GM18951 (cell line): ENCODE measurements at regions of chr11 and their contacts with region 1.

Region 1: DNA sequence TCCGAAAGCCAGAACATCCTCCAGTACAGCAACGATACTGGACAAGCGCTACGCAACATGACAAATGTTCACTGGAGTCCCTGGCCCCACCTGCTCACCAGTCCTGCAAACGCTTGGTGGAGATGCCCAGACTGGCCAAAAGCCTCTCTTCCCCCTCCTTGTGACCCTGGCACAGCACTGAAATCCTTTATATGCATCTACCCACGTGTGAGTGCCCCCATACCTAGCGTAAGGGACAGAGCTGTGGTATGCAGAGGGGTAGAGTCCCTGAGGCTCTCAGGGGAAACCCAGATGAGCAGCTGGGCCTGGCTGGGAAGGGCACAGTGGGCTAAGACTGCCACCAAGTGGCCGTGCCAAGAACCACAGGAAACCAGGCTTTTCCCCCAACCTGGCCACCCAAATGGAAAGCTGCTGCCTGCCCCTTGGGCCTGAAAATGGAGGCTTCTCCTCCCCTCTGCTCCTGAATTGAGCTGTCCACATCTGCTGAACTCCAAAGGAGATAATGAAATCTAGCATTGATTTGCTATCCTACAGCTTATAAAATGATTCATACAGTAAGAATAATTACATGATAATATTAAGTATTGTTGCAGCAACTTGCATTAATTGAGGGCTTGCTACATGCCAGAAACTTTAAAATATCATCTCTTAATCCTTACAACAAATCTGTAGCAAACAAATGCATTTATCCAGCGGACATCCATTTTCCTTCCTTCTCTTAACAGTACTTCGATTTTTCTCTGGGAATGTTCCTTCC is 24.8 kb upstream of the TTC12 start:
- POLR2A ChIP-seq: no peak

Region 2: GRCh38 chr11:112280268-112281126 is 1009.1 kb before region 1 on chr11:
- in situ Hi-C with region 1: loop called (anchors 25 kb)
- POLR2A ChIP-seq: no peak

Region 3: DNA sequence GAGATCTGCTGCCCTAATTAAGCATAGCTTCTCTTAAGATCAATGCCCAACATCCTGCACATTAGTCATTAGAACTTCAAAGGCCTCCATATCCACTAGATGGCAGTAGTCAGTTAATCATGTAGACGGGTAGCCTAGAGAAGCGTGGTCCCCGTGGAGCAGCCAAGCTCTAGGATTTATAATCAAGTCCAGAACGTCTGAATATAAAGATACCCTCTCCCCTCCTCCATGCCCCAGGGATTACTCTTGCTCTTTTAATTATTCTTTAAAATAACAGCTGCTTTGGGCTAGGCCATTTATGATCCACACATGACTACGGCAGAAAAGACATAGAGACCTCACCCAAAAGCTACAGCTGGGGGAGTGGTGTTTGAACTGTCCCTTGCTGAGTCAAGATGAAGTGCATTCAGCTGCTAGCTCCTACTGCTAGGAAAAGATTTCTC is 701.3 kb before region 1 on chr11:
- in situ Hi-C with region 1: loop called (anchors 10 kb)
- POLR2A ChIP-seq: no peak

Region 4: GRCh38 chr11:113721462-113722066 is 432.0 kb after region 1 on chr11:
- in situ Hi-C with region 1: no loop called
- POLR2A ChIP-seq: no peak